ENCODE measurements at regions of chr21 and their contacts with region 1.

Region 1: DNA sequence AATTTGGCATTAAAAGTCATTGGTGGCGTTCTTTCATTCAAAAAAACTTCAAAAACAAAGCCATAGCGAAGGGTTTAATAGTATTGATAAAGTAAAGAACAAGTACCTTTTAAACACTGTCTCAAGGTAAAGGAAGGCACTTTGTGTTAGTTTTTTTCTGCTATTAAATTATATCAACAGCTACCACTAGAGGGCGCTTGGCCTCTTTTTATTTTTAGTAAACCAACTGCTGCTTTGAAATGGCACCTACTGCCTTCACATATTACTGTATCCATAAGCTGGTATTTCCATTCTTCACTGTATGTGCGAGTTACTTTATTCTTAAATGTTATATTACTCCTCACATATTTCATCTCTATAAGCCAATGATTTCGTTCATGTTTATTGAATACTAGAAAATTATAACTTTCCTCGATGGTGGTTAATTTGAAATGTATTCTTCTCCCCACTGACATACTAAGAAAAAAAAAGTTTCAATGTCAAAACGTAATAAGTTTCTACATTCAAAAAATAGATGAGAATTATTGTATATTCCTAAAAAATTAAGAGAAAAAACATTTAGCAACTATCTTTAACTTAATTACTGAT is 125.7 kb upstream of the CXADR start:
- DNase-seq: peak; percentile 87
- H3K4me3 ChIP-seq: peak overlapping the region; percentile 30
- H3K27ac ChIP-seq: peak overlapping the region; percentile 62
- H3K4me1 ChIP-seq: peaks cover 45% of the 10 kb centered on the region
- CTCF ChIP-seq: peak; percentile 95

Region 2: DNA sequence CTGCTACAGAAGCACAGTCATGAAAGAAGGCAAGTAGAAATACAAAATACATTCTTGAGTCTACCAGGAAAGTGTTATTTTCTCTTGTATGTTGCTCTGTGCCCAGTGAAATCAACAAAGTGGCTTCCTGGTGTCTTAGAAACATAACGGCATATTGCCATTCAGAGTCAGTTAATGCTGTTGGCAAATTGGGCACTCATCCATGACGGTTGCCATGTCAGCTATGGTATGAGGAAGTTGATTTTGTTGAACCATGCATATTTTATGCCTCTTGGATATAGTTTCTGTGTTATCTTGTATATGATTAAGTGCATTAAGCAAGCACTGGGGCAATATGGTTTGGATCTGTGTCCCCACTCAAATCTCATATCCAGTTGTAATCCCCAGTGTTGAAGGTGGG is 27.3 kb before region 1 on chr21:
- CTCF ChIA-PET with region 1: no interaction called
- POLR2A ChIA-PET with region 1: no interaction called
- intact Hi-C with region 1: no loop called
- DNase-seq: peak; percentile 18
- H3K4me3 ChIP-seq: no peak overlapping the region
- H3K27ac ChIP-seq: no peak overlapping the region
- H3K4me1 ChIP-seq: peaks cover 7% of the 10 kb centered on the region
- CTCF ChIP-seq: no peak

Region 3: DNA sequence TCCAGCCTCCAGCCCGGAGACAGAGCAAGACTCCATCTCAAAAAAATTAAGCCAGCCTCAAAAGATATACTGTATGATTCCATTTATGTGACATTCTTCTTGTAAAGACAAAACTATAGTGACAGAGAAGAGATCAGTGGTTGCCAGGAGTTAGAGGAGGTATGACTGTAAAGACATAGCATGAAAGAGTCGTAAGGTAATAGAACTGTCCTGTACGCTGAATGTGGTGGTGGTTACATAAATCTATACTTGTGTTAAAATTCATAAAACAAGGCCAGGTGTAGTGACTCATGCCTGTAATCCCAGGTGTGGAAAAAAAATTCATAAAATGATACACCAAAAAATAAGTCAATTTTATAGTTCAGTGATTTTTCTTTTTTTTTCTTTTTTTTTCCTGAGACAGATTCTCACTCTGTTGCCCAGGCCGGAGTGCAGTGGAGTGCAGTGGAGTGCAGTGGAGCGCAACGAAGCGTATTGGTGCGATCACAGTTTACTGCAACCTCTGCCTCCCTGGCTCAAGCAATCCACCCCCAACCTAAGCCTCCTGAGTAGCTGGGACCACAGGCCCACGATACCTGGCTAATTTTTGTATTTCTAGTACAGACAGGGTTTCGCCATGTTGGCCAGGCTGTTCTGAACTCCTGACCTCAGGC is 40.8 kb after region 1 on chr21:
- CTCF ChIA-PET with region 1: interaction called, 4 read pairs
- POLR2A ChIA-PET with region 1: interaction called, 6 read pairs
- intact Hi-C with region 1: loop called (anchors 1 kb)
- DNase-seq: peak; percentile 92
- H3K4me3 ChIP-seq: peak overlapping the region; percentile 50
- H3K27ac ChIP-seq: peak overlapping the region; percentile 94
- H3K4me1 ChIP-seq: peaks cover 67% of the 10 kb centered on the region
- CTCF ChIP-seq: no peak

Region 4: DNA sequence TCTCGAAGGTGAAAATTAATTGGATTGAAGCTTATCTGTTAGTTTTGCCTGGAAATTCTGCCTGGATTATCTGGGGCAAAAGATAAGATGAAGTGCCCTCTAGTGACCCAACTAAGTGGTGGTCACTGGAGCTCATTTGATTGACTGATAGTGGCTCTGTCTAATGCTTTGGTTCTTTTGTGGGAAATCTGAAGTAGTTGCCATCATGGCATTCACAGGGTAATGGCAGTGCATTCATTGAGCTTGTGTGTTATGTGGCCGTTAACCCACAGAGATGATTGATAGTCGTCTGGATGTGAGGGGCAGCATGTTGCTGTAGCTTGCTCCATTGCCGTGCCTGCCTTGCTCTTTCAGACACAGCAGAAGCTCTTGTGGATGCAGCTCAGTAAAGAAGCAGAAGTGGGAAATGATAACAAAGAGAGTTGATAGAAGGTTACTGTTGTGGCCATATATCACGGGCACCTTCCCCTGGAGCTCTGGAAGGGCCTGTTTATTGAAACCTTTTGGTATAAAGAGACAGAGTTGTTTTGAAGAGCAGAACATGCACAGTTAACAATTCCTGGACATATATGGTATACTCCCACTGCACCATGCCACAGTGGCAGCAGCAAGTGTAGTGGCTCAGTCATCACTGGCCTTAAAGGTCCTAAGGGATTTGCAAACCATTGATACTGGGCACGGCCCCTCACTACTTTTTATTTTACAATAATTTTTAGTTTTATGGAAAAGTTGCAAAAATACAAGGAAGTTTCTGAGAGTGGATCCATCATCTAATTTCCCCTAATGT is 167.7 kb after region 1 on chr21:
- CTCF ChIA-PET with region 1: interaction called, 13 read pairs
- POLR2A ChIA-PET with region 1: interaction called, 9 read pairs
- intact Hi-C with region 1: loop called (anchors 1 kb)
- DNase-seq: peak; percentile 20
- H3K4me3 ChIP-seq: no peak overlapping the region
- H3K27ac ChIP-seq: no peak overlapping the region
- H3K4me1 ChIP-seq: peaks cover 4% of the 10 kb centered on the region
- CTCF ChIP-seq: peak; percentile 70

Region 5: GRCh38 chr21:17611414-17612022 is 224.4 kb after region 1 on chr21:
- CTCF ChIA-PET with region 1: no interaction called
- POLR2A ChIA-PET with region 1: interaction called, 13 read pairs
- intact Hi-C with region 1: no loop called
- DNase-seq: peak; percentile 85
- H3K4me3 ChIP-seq: peak overlapping the region; percentile 92
- H3K27ac ChIP-seq: peak overlapping the region; percentile 48
- H3K4me1 ChIP-seq: peaks cover 30% of the 10 kb centered on the region
- CTCF ChIP-seq: no peak

Region 6: DNA sequence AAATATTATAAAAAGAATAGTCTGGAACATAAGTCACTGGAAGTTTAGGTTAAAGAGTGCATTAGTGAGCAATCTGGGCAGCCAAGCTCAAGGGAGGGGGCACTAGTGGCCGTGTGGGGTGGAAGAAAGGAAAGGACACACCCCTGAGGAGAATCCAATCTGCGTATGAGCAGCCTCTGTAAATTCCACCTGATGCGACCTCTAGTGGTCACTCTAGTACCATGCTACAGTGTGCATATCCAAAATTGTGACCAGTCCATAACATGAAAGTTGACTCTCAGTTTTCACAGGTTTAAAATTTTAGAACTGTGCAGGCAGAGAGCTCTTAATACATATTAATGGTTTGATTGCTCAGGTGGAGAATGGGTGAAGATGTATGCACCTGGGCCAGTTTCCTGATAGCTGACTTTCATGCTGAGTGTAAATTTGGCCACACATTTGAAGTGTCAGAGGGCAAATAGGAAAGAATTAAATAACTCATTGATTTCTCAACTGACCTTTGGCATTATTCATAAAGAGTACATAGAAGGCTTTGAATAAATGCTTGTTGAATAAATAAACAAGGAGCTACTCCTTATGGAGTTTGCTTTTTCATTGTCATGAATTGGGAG is 538.0 kb after region 1 on chr21:
- CTCF ChIA-PET with region 1: no interaction called
- POLR2A ChIA-PET with region 1: no interaction called
- intact Hi-C with region 1: loop called (anchors 10 kb)
- DNase-seq: peak; percentile 76
- H3K4me3 ChIP-seq: no peak overlapping the region
- H3K27ac ChIP-seq: no peak overlapping the region
- H3K4me1 ChIP-seq: no peaks in the 10 kb centered on the region
- CTCF ChIP-seq: peak; percentile 94

Measured in OCI-LY7 (cell line).